AG04449 (cell line): ENCODE measurements at regions of chr15 and their contacts with region 1.

Region 1: DNA sequence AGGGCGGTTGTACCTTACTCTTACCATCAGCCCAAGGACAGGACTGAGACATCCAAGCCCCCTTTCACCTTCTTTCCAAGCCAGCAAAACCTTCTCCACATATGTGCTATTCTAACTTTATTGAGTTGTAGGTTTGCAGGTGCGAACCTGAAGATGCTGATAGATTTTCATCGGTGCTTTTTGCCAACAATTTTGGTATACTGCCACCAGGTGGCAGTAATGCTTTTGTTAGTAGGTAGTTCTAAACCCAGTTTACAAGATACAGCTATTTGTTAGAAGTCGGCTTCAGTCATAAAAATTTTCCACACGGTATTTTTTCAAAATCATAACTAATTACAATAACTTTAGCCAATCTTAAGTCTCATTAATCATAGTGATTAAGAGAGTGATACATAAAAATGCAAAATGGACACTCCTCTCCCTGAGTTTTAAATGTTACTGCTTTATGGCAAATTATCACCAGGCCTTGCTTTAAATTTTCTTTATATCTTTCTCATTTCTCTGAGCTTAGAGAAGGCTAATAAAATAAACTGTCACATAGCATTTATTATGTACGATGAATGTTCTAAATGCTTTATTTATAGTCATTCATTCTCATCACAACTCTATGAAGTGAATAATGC is 636 bp downstream of the TBC1D21 start:
- DNase-seq: peak; percentile 17
- H3K4me3 ChIP-seq: no peak overlapping the region
- CTCF ChIP-seq: peak; percentile 23

Region 2: GRCh38 chr15:73885954-73886700 is 12.1 kb after region 1 on chr15:
- CTCF ChIA-PET with region 1: interaction called, 31 read pairs
- POLR2A ChIA-PET with region 1: no interaction called
- DNase-seq: no peak
- H3K4me3 ChIP-seq: no peak overlapping the region
- CTCF ChIP-seq: no peak

Region 3: GRCh38 chr15:73908030-73908821 is 34.2 kb after region 1 on chr15:
- CTCF ChIA-PET with region 1: interaction called, 168 read pairs
- POLR2A ChIA-PET with region 1: interaction called, 3 read pairs
- DNase-seq: no peak
- H3K4me3 ChIP-seq: no peak overlapping the region
- CTCF ChIP-seq: peak; percentile 98

Region 4: DNA sequence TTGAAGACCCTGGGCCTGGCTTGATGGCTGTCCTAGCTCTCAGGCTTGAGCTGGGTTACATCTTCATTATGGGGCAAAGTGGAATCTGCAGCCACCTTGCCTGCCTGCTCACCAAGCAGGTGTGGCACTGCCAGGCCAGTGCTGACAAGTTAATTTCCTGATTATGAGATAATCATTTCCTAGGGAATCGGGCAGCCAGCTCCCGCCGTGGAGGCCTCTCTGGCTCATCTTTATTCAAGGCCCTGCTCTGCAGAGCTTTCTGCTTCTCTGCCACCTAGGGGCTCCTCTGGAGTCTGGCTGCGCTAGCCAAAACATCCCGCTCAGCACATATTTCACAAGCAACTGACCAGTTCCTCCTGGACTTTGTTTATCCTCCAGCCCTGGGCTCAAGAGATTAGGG is 62.2 kb after region 1 on chr15:
- CTCF ChIA-PET with region 1: interaction called, 14 read pairs
- POLR2A ChIA-PET with region 1: no interaction called
- DNase-seq: no peak
- H3K4me3 ChIP-seq: no peak overlapping the region
- CTCF ChIP-seq: peak; percentile 14

Region 5: DNA sequence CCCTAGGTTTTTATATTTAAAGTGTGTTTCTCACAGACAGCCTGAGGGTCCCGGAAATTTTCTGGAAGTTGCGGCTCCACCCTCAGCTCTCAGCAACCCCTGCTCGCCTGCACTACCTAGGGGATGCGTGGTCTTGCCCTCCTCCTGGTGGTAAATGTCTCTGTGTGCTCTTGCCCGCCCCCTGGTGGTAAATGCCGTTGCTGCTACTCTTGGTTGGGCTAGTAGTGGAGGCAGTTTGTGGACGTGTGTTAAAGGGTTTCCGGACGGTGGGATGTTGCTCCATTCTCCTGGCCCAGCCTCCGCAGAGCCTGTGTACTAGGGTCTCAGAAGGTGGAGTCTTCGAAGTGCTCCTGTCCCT is 90.7 kb after region 1 on chr15:
- CTCF ChIA-PET with region 1: interaction called, 50 read pairs
- POLR2A ChIA-PET with region 1: no interaction called
- DNase-seq: no peak
- H3K4me3 ChIP-seq: no peak overlapping the region
- CTCF ChIP-seq: peak; percentile 99